Activated CD4-positive, alpha-beta T cell treated with anti-CD3 and anti-CD28 coated beads for 36 hours (primary cell): ENCODE measurements at regions of chr17 and their contacts with region 1.

Region 1: GRCh38 chr17:66200685-66201092 is 8.8 kb upstream of the CEP112 start:
- DNase-seq: peak; percentile 69
- ATAC-seq: peak; percentile 74
- H3K4me3 Mint-ChIP-seq: no peak overlapping the region
- H3K27ac Mint-ChIP-seq: no peak overlapping the region
- H3K4me1 Mint-ChIP-seq: peaks cover 17% of the 10 kb centered on the region
- H3K27me3 Mint-ChIP-seq: no peaks in the 10 kb centered on the region

Region 2: GRCh38 chr17:66211047-66211799 is 10.5 kb after region 1 on chr17:
- CTCF ChIA-PET with region 1: interaction called, 11 read pairs
- POLR2A ChIA-PET with region 1: no interaction called
- intact Hi-C with region 1: no loop called
- DNase-seq: no peak
- ATAC-seq: no peak
- H3K4me3 Mint-ChIP-seq: no peak overlapping the region
- H3K27ac Mint-ChIP-seq: no peak overlapping the region
- H3K4me1 Mint-ChIP-seq: no peaks in the 10 kb centered on the region
- H3K27me3 Mint-ChIP-seq: no peaks in the 10 kb centered on the region

Region 3: DNA sequence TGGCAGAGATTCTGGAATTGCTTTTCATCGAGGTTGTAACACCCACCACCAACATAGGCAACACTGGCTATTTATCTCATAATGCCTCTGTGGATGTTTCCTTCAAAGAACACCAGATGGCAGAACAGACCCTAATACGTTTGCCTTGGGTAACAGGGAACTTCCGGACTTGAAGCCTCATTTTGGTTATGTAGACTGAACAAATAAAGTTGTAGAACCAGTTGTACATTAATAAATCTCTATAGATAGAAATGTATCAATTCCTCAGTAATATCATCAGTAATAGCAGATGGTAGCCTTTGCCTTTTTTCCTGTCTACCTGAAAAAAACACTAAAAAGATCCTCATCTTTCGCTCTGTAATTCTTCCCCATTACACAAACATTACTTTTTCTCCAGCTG is 54.4 kb after region 1 on chr17:
- CTCF ChIA-PET with region 1: interaction called, 4 read pairs
- POLR2A ChIA-PET with region 1: no interaction called
- intact Hi-C with region 1: loop called (anchors 2 to 5 kb)
- DNase-seq: peak; percentile 35
- ATAC-seq: peak; percentile 93
- H3K4me3 Mint-ChIP-seq: peak overlapping the region; percentile 51
- H3K27ac Mint-ChIP-seq: peak overlapping the region; percentile 86
- H3K4me1 Mint-ChIP-seq: peaks cover 19% of the 10 kb centered on the region
- H3K27me3 Mint-ChIP-seq: no peaks in the 10 kb centered on the region

Region 4: DNA sequence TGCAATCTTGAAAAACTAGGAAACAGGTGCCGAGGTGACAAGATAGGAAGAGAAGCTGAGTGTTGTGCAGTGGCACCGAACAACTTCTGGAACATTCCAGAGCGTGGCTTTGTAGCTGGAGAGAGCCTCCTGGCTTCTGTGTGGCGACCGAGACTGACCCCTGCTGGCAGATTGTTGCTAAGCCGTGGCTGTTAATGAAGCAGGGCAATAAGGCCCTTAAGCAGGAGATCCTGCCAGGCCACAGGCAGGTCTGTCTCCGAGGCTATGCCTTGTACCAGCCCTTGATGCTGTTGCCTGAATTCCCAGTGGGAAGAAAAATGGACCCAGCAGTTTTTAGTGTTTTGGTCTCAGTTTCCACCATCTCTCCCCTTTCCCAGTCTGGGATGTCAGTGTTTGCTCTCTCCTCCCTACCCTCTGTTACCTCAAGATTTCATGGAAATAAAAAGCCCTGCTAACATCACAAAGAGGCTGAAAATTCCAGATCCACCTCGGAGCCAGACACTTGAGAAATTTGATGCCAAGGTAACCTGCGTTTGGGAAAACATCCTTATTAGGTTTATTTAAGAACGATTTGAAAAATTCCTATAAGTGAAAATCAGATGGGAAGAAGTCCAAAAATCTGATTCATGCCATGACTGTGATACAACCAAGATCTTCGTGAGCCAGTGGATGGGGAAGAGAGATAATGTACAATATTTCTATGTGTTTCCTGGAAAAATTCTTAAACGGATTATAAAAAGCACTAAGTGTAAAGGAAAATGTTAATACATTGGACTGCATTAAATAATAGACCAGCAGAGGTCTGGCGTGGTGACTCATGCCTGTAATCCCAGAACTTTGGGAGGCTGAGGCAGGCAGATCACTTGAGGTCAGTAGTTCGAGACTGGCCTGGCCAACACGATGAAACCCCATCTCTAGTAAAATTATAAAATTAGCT is 366.8 kb after region 1 on chr17:
- CTCF ChIA-PET with region 1: interaction called, 22 read pairs
- POLR2A ChIA-PET with region 1: no interaction called
- intact Hi-C with region 1: loop called (anchors 1 to 2 kb)
- DNase-seq: peak; percentile 90
- ATAC-seq: peak; percentile 88
- H3K4me3 Mint-ChIP-seq: no peak overlapping the region
- H3K27ac Mint-ChIP-seq: peak overlapping the region; percentile 31
- H3K4me1 Mint-ChIP-seq: peaks cover 40% of the 10 kb centered on the region
- H3K27me3 Mint-ChIP-seq: no peaks in the 10 kb centered on the region

Region 5: GRCh38 chr17:66673668-66674315 is 473.1 kb after region 1 on chr17:
- CTCF ChIA-PET with region 1: no interaction called
- POLR2A ChIA-PET with region 1: no interaction called
- intact Hi-C with region 1: loop called (anchors 2 kb)
- DNase-seq: peak; percentile 63
- ATAC-seq: peak; percentile 80
- H3K4me3 Mint-ChIP-seq: peak overlapping the region; percentile 6
- H3K27ac Mint-ChIP-seq: peak overlapping the region; percentile 84
- H3K4me1 Mint-ChIP-seq: peaks cover 61% of the 10 kb centered on the region
- H3K27me3 Mint-ChIP-seq: no peaks in the 10 kb centered on the region